ENCODE measurements at regions of chr16 and their contacts with region 1.

Region 1: DNA sequence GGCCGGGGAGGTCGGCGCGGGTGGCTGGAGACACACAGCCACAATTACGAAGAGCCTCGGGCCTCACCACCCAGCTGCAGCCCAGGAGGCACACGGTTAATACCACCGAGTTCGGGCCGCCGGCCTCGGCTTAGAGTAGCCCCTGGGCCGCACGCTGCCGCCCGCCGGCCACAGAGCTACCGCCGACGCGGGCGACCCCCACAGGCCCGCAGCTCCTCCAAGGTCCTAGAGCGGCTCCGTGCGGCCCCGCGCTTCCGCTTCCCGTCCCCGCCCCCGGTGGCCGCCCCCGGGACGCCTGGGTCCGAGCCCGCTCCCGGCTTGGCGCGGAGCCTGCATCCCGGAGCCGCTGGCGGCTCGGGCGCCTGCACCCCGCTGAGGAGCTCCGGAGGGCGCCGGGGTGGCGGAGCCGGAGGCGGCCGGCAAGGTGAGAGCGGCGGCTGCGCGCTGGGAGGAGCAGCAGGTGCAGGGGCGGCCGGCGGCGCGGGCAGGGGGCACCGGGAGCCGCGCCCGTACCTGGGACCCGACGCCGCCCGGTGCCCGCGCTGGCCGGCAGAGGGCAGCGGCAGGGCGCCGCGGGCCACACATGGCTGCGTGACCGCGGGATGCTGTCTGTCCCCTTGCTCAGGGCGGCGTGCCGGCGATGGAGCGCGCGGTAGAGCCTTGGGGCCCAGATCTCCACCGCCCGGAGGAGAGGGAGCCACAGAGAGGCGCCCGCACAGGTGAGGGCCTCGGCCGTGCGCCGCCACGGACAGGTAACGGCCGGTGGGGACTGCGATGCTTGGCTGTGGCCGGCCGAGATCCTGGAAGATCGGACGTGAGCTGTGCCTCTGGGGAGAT is at the start of gene ZNF48:
- DNase-seq: peak; percentile 89 to 94 (median 92)
- ATAC-seq: peak; percentile 93 to 98 (median 98)
- H3K4me3 ChIP-seq: peak within 1 kb of the TSS; percentile 58 to 99 (median 85)
- H3K27ac ChIP-seq: peak within 1 kb of the TSS; percentile 67 to 91 (median 84)
- H3K4me1 ChIP-seq: peaks cover 5 to 36% (median 21%) of the 10 kb centered on the region in 12 donors
- H3K27me3 ChIP-seq: no peaks in the 10 kb centered on the region
- CTCF ChIP-seq: peak in 8 of 12 donors; percentile 20 to 56 (median 41)
- POLR2A ChIP-seq: peak in 1 of 2 donors; percentile 47
- total RNA-seq, gene ZNF48: 4.1 to 10.3 (median 5.9) TPM

Region 2: GRCh38 chr16:30370444-30371247 is 24.7 kb before region 1 on chr16 and contains the start of gene TBC1D10B:
- intact Hi-C with region 1: loop called in 2 of 10 experiments (anchors 5 kb)
- DNase-seq: peak; percentile 97 to 99 (median 98)
- ATAC-seq: peak; percentile 90 to 96 (median 94)
- H3K4me3 ChIP-seq: peak within 1 kb of the TSS; percentile 78 to 99 (median 91)
- H3K27ac ChIP-seq: peak within 1 kb of the TSS; percentile 78 to 95 (median 88)
- H3K4me1 ChIP-seq: peaks cover 0 to 49% (median 35%) of the 10 kb centered on the region in 12 donors
- H3K27me3 ChIP-seq: no peaks in the 10 kb centered on the region
- CTCF ChIP-seq: peak in 9 of 12 donors; percentile 7 to 54 (median 29)
- POLR2A ChIP-seq: peak in 1 of 2 donors; percentile 73
- total RNA-seq, gene TBC1D10B: 16.9 to 33.2 (median 24.2) TPM

Region 3: GRCh38 chr16:30378236-30379204 is 16.9 kb before region 1 on chr16:
- intact Hi-C with region 1: loop called in 3 of 10 experiments (anchors 1 to 2 kb)
- DNase-seq: peak; percentile 99 to 100 (median 99)
- ATAC-seq: peak; percentile 96 to 98 (median 98)
- H3K4me3 ChIP-seq: peak overlapping the region; percentile 63 to 82 (median 70)
- H3K27ac ChIP-seq: peak overlapping the region; percentile 97 to 100 (median 99)
- H3K4me1 ChIP-seq: peaks cover 0 to 44% (median 15%) of the 10 kb centered on the region in 12 donors
- H3K27me3 ChIP-seq: no peaks in the 10 kb centered on the region
- CTCF ChIP-seq: peak in 5 of 12 donors; percentile 6 to 39 (median 25)
- POLR2A ChIP-seq: peak in 1 of 2 donors; percentile 86

Region 4: GRCh38 chr16:30429678-30430427 is 34.5 kb after region 1 on chr16 and contains the start of gene DCTPP1:
- intact Hi-C with region 1: no loop called
- DNase-seq: peak; percentile 94 to 98 (median 95)
- ATAC-seq: peak; percentile 99
- H3K4me3 ChIP-seq: peak within 1 kb of the TSS; percentile 30 to 88 (median 71)
- H3K27ac ChIP-seq: peak within 1 kb of the TSS in 11 of 12 donors; percentile 36 to 79 (median 73)
- H3K4me1 ChIP-seq: peaks cover 0 to 22% (median 13%) of the 10 kb centered on the region in 12 donors
- H3K27me3 ChIP-seq: no peaks in the 10 kb centered on the region
- CTCF ChIP-seq: peak; percentile 53 to 84 (median 72)
- POLR2A ChIP-seq: peak in 1 of 2 donors; percentile 46
- total RNA-seq, gene DCTPP1: 18.9 to 32.6 (median 28.4) TPM

Measured in heart left ventricle (tissue), 16 donors.